CD14-positive monocyte (primary cell): ENCODE measurements at regions of chr7 and their contacts with region 1.

Region 1: GRCh38 chr7:26864309-26865093 is at the start of gene SKAP2:
- DNase-seq: peak; percentile 98 to 99 (median 99)
- H3K4me3 ChIP-seq: peak within 1 kb of the TSS; percentile 71 to 97 (median 75)
- H3K4me3 Mint-ChIP-seq: peak within 1 kb of the TSS; percentile 97 to 99
- H3K27ac ChIP-seq: peak within 1 kb of the TSS; percentile 91 to 95
- H3K27ac Mint-ChIP-seq: peak within 1 kb of the TSS; percentile 97 to 100 (median 99)
- H3K4me1 ChIP-seq: peaks cover 7 to 43% of the 10 kb centered on the region in 2 donors
- H3K4me1 Mint-ChIP-seq: peaks cover 33% of the 10 kb centered on the region
- H3K27me3 ChIP-seq: no peaks in the 10 kb centered on the region
- H3K27me3 Mint-ChIP-seq: peaks cover 0 to 6% (median 4%) of the 10 kb centered on the region in 3 donors
- CTCF ChIP-seq: no peak
- polyA plus RNA-seq, gene SKAP2: 19.2 to 204 (median 158) TPM

Region 2: DNA sequence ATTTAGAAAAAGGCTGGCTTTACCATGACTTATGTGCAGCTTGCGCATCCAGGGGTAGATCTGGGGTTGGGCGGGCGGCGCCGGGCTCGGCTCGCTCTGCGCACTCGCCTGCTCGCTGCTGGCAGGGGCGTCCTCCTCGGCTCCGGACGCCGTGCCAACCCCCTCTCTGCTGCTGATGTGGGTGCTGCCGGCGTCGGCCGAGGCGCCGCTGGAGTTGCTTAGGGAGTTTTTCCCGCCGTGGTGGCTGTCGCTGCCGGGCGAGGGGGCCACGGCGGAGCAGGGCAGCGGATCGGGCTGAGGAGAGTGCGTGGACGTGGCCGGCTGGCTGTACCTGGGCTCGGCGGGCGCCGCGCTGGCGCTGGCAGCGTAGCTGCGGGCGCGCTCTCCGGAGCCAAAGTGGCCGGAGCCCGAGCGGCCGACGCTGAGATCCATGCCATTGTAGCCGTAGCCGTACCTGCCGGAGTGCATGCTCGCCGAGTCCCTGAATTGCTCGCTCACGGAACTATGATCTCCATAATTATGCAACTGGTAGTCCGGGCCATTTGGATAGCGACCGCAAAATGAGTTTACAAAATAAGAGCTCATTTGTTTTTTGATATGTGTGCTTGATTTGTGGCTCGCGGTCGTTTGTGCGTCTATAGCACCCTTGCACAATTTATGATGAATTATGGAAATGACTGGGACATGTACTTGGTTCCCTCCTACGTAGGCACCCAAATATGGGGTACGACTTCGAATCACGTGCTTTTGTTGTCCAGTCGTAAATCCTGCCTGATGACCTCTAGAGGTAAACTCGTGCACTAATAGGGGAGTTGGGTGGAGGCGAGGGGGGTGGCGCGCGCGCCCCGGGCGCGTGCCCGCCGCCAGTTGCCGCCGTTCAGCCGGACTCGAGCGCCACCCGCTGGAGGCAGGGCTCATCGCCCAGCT is 278.8 kb after region 1 on chr7 and contains the start of gene HOXA5:
- intact Hi-C with region 1: loop called in 1 of 2 experiments (anchors 5 kb)
- DNase-seq: peak; percentile 57 to 87 (median 72)
- H3K4me3 ChIP-seq: peak within 1 kb of the TSS; percentile 27 to 70 (median 29)
- H3K4me3 Mint-ChIP-seq: peak within 1 kb of the TSS; percentile 81 to 92
- H3K27ac ChIP-seq: peak within 1 kb of the TSS in 1 of 2 donors; percentile 36
- H3K27ac Mint-ChIP-seq: peak within 1 kb of the TSS in 6 of 7 donors; percentile 50 to 85 (median 68)
- H3K4me1 ChIP-seq: peaks cover 11 to 14% of the 10 kb centered on the region in 2 donors
- H3K4me1 Mint-ChIP-seq: peaks cover 18% of the 10 kb centered on the region
- H3K27me3 ChIP-seq: peaks cover 21 to 56% of the 10 kb centered on the region in 2 donors
- H3K27me3 Mint-ChIP-seq: peaks cover 46 to 63% (median 59%) of the 10 kb centered on the region in 3 donors
- CTCF ChIP-seq: peak; percentile 47
- polyA plus RNA-seq, gene HOXA5: 0.85 to 3.0 (median 1.8) TPM